ENCODE measurements at regions of chr18 and their contacts with region 1.

Region 1: DNA sequence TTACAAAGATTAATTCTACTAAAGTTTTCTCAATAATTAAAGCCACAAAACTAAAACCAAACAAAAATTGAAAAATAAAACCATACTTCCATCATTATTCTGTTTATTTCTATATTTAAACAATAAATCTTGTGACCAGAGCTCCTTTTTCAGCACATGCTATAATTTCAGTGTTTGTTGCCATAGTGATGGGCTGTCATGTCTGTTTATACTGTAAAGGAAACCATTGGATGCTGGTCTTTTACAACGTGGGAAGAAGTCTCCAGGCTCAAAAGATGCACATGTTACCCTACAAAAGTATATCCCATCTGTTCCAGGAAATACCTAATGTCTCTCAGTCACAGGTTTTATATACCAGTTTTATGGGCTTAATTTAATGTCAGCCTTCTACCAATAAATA is 100.1 kb upstream of the MC2R start:
- DNase-seq: no peak
- H3K4me3 ChIP-seq: no peak overlapping the region
- H3K27ac ChIP-seq: no peak overlapping the region
- H3K4me1 ChIP-seq: no peaks in the 10 kb centered on the region
- H3K27me3 ChIP-seq: no peaks in the 10 kb centered on the region
- CTCF ChIP-seq: no peak

Region 2: GRCh38 chr18:13973056-13973575 is 42.3 kb before region 1 on chr18:
- CTCF ChIA-PET with region 1: no interaction called
- dilution Hi-C with region 1: no loop called
- in situ Hi-C with region 1: no loop called
- intact Hi-C with region 1: no loop called
- DNase-seq: no peak
- H3K4me3 ChIP-seq: no peak overlapping the region
- H3K27ac ChIP-seq: no peak overlapping the region
- H3K4me1 ChIP-seq: no peaks in the 10 kb centered on the region
- H3K27me3 ChIP-seq: no peaks in the 10 kb centered on the region
- CTCF ChIP-seq: no peak

Region 3: GRCh38 chr18:14074187-14074586 is 58.8 kb after region 1 on chr18:
- CTCF ChIA-PET with region 1: no interaction called
- dilution Hi-C with region 1: no loop called
- in situ Hi-C with region 1: no loop called
- intact Hi-C with region 1: no loop called
- DNase-seq: no peak
- H3K4me3 ChIP-seq: no peak overlapping the region
- H3K27ac ChIP-seq: no peak overlapping the region
- H3K4me1 ChIP-seq: no peaks in the 10 kb centered on the region
- H3K27me3 ChIP-seq: no peaks in the 10 kb centered on the region
- CTCF ChIP-seq: no peak

Region 4: DNA sequence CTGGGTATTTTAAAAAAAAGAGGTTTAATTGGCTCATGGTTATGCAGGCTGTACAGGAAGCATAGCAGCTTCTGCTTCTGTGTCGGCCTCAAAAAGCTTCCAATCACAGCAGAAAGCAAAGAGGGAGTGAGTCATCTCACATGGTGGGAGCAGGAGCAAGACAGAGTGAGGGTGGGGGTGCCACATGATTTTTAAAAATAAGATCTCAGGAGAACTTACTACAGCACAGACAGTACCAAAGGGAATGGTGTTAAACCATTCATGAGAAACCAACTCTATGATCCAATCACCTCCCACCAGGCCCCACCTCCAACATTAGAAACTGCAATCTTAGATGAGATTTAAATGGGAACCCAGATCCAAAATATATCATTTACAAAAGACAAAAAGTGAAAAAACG is 102.2 kb after region 1 on chr18:
- CTCF ChIA-PET with region 1: no interaction called
- dilution Hi-C with region 1: no loop called
- in situ Hi-C with region 1: loop called in 1 of 2 experiments (anchors 25 kb)
- intact Hi-C with region 1: no loop called
- DNase-seq: no peak
- H3K4me3 ChIP-seq: no peak overlapping the region
- H3K27ac ChIP-seq: no peak overlapping the region
- H3K4me1 ChIP-seq: no peaks in the 10 kb centered on the region
- H3K27me3 ChIP-seq: no peaks in the 10 kb centered on the region
- CTCF ChIP-seq: no peak

Measured in mammary epithelial cell (primary cell).